Activated CD4-positive, alpha-beta memory T cell treated with anti-CD3 and anti-CD28 coated beads for 36 hours (primary cell): ENCODE measurements at regions of chr17 and their contacts with region 1.

Region 1: GRCh38 chr17:72556944-72557826 is 436.4 kb downstream of the SOX9 start:
- DNase-seq: peak; percentile 79
- H3K4me3 Mint-ChIP-seq: no peak overlapping the region
- H3K27ac Mint-ChIP-seq: no peak overlapping the region
- H3K4me1 Mint-ChIP-seq: no peaks in the 10 kb centered on the region
- H3K27me3 Mint-ChIP-seq: peaks cover 1% of the 10 kb centered on the region

Region 2: DNA sequence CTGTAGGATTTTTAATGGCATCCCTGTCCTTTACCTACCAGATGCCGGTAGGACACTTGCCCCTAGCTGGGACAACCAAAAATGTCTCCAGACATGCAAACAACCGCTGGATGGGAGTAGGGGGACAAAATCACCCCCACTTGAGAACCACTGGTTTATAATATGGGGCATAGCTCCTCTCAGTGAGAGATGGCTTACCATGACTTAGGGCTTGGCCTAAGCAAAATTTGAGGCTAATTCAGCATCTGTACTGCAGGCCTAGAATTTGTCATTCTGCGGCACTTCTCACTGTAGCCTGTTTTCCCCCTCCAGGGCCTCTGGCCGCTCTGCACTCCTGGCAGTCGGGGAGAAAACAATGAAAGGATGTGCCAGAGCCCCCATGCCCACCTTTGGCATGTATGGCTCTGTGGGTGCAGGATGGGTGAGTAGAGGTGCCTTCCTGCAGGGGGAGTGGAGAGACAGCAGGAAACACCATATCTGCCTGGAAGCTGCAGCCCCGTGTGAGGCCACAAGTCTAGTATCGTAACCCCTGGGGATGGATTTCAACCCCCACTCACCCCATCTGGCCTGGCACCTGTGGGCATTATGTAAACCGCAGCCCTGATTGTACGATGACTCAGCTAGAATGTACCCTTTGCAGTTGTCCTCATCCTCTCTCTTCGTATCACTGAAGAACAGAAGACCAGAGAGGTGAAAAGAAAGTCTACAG is 168.3 kb before region 1 on chr17:
- CTCF ChIA-PET with region 1: no interaction called
- POLR2A ChIA-PET with region 1: no interaction called
- intact Hi-C with region 1: no loop called
- DNase-seq: no peak
- H3K4me3 Mint-ChIP-seq: no peak overlapping the region
- H3K27ac Mint-ChIP-seq: no peak overlapping the region
- H3K4me1 Mint-ChIP-seq: no peaks in the 10 kb centered on the region
- H3K27me3 Mint-ChIP-seq: peaks cover 7% of the 10 kb centered on the region

Region 3: DNA sequence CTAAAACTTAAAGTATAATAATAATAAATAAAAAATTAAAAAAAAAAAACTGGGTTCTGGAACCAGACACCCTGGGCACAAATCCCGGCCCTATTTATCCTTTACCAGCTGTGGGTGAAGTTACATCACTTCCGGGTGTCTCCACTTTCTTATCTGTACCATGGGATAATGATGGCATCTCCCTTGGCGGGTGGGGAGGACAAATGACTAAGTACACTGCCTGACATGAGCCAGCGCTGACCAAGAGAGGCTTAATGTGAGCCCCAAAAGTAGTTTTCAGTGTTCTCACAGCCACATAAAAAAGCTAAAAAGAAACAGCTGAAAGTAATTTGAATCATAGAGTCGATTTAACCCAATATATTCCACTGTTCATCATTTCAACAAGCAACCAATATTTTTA is 11.4 kb before region 1 on chr17:
- CTCF ChIA-PET with region 1: interaction called, 16 read pairs
- POLR2A ChIA-PET with region 1: no interaction called
- intact Hi-C with region 1: no loop called
- DNase-seq: no peak
- H3K4me3 Mint-ChIP-seq: no peak overlapping the region
- H3K27ac Mint-ChIP-seq: no peak overlapping the region
- H3K4me1 Mint-ChIP-seq: no peaks in the 10 kb centered on the region
- H3K27me3 Mint-ChIP-seq: peaks cover 15% of the 10 kb centered on the region

Region 4: GRCh38 chr17:72618001-72618509 is 60.9 kb after region 1 on chr17:
- CTCF ChIA-PET with region 1: interaction called, 10 read pairs
- POLR2A ChIA-PET with region 1: no interaction called
- intact Hi-C with region 1: no loop called
- DNase-seq: peak; percentile 39
- H3K4me3 Mint-ChIP-seq: peak overlapping the region; percentile 61
- H3K27ac Mint-ChIP-seq: no peak overlapping the region
- H3K4me1 Mint-ChIP-seq: peaks cover 21% of the 10 kb centered on the region
- H3K27me3 Mint-ChIP-seq: peaks cover 9% of the 10 kb centered on the region

Region 5: GRCh38 chr17:72985881-72986720 is 428.9 kb after region 1 on chr17:
- CTCF ChIA-PET with region 1: interaction called, 14 read pairs
- POLR2A ChIA-PET with region 1: no interaction called
- intact Hi-C with region 1: loop called (anchors 1 kb)
- DNase-seq: peak; percentile 69
- H3K4me3 Mint-ChIP-seq: no peak overlapping the region
- H3K27ac Mint-ChIP-seq: no peak overlapping the region
- H3K4me1 Mint-ChIP-seq: peaks cover 1% of the 10 kb centered on the region
- H3K27me3 Mint-ChIP-seq: no peaks in the 10 kb centered on the region

Region 6: DNA sequence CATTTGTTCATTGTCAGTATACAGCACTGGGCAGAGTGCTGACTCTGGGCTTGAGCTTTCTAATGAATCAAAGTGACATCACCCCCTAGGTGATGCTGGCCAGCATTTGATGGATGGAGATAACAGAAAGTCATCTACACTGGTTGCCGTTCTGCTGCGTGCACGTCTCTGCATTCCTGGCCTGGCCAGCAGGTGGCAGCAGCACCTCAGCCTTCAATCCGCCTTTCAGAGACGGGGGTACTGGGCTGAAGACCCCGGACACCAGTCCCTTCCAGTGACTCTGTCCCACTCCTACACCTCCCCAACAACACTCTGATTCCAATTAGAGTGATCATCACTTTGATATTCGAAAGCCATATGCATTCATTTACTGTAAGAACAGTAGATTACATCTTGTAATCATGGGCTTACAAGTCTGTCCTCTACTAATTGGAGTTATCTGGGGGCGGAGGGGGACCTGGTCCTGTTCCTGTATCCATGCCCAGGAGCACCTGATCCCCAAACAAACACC is 698.5 kb after region 1 on chr17:
- CTCF ChIA-PET with region 1: interaction called, 7 read pairs
- POLR2A ChIA-PET with region 1: no interaction called
- intact Hi-C with region 1: loop called (anchors 5 kb)
- DNase-seq: peak; percentile 65
- H3K4me3 Mint-ChIP-seq: no peak overlapping the region
- H3K27ac Mint-ChIP-seq: no peak overlapping the region
- H3K4me1 Mint-ChIP-seq: peaks cover 3% of the 10 kb centered on the region
- H3K27me3 Mint-ChIP-seq: no peaks in the 10 kb centered on the region